Gastrocnemius medialis (tissue), 4 donors: ENCODE measurements at regions of chr13 and their contacts with region 1.

Region 1: DNA sequence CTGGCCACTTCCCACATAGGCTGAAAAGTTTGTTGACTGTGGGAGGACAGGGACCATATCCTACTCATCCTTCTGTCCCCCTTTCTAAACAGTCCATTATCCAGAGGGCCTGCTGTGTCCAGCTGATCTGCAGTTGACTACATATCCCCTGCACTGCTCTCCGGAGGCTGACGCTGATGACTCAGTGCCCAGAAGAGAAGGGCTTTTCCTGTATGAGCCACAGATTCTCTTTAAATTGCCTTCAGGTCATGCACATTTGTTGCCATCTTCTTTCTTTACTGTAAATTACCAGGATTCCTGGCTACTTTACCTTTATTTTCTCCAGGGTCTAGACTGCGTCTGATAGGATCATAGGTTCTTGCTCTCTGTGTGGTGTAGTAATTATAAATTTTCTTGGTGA is 125.2 kb downstream of the LACC1 start:
- DNase-seq: no peak
- ATAC-seq: no peak
- H3K4me3 ChIP-seq: no peak overlapping the region
- H3K27ac ChIP-seq: no peak overlapping the region
- H3K4me1 ChIP-seq: no peaks in the 10 kb centered on the region
- H3K27me3 ChIP-seq: no peaks in the 10 kb centered on the region
- CTCF ChIP-seq: no peak
- POLR2A ChIP-seq: no peak

Region 2: DNA sequence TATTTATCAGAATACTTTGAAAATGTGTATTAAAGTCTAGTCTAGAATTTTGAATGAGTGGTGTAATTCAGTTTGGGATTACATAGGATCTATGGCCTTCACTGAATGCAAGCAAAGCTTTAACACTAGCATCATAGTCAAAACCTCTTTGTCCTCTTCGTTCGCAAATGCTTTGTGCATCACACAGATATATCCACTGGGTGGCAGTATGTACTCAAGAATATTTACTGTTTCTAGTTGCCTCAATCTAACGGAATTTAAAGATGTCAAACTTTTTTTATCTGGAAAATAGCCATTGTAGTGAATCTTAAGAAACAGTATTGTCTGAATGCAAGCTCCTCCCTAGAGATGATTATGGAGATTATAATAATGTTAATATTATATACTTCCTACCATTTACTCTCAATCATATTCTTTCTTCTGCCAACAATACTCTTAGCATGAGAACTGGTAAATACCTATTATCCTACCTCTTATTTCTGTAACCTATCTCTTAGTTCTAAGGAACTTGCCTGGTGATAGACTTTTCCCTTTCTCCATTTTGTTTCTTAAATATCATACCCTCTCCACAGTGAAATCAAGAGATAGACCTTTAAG is 99.3 kb before region 1 on chr13:
- in situ Hi-C with region 1: no loop called
- intact Hi-C with region 1: no loop called
- DNase-seq: no peak
- ATAC-seq: peak; percentile 61 to 77
- H3K4me3 ChIP-seq: no peak overlapping the region
- H3K27ac ChIP-seq: no peak overlapping the region
- H3K4me1 ChIP-seq: peaks cover 0 to 4% of the 10 kb centered on the region in 2 donors
- H3K27me3 ChIP-seq: no peaks in the 10 kb centered on the region
- CTCF ChIP-seq: peak; percentile 66 to 84 (median 76)
- POLR2A ChIP-seq: no peak

Region 3: DNA sequence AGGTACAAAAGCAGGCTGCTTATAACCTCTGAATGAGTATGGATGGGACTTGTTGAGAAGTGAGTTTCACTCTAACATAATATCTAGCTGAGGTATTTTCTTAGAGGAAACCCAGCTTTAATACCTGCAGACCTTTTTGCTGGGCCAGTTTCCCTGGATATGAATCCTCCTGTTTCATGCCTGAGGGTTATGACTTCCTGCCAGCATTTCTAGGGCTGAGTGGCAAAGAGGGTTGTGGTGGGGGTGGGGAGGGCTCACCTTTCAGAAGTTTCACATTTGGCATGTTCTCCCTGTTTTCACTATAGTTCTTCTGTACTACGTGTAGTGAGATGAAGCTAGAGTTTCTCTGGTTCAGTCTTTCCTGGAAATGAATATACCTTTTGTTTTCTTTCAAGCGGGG is 51.5 kb before region 1 on chr13:
- in situ Hi-C with region 1: no loop called
- intact Hi-C with region 1: loop called (anchors 10 kb)
- DNase-seq: no peak
- ATAC-seq: no peak
- H3K4me3 ChIP-seq: no peak overlapping the region
- H3K27ac ChIP-seq: no peak overlapping the region
- H3K4me1 ChIP-seq: peaks cover 3 to 11% of the 10 kb centered on the region in 2 donors
- H3K27me3 ChIP-seq: no peaks in the 10 kb centered on the region
- CTCF ChIP-seq: no peak
- POLR2A ChIP-seq: no peak